Heart right ventricle (tissue), 16 donors: ENCODE measurements at regions of chr1 and their contacts with region 1.

Region 1: DNA sequence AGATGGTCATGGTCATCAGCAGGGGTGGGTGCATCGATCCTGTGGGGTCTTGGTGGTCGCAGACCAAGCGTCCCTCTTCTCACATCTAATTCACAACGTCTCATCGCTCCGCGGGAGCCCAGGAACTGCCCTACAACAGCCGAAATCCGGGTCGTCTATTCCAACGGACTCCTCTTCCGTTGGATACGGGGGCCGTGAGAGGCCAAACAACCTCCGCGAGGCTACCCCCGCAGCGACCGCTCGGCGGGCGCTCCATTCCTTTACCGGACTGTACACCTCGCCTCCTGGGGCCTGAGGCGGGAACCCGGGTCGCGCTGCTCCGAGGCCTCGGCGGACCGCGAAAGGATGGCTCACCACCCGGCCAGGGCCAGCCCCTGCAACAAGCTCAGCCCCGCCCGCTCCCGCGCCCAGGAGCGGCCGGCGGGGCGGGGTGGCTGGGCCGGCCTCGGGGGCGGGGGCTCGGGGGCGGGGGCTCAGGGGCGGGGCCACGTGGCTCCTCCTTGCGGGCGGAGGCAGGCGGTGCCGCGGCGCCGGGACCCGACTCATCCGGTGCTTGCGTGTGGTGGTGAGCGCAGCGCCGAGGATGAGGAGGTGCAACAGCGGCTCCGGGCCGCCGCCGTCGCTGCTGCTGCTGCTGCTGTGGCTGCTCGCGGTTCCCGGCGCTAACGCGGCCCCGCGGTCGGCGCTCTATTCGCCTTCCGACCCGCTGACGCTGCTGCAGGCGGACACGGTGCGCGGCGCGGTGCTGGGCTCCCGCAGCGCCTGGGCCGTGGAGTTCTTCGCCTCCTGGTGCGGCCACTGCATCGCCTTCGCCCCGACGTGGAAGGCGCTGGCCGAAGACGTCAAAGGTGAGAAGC is at the start of gene QSOX1:
- DNase-seq: peak; percentile 91 to 92
- ATAC-seq: peak; percentile 88 to 96 (median 94)
- H3K4me3 ChIP-seq: peak within 1 kb of the TSS; percentile 73 to 100 (median 95)
- H3K27ac ChIP-seq: peak within 1 kb of the TSS; percentile 93 to 98 (median 96)
- H3K4me1 ChIP-seq: peaks cover 0 to 57% (median 32%) of the 10 kb centered on the region in 9 donors
- H3K27me3 ChIP-seq: no peaks in the 10 kb centered on the region
- CTCF ChIP-seq: peak; percentile 20 to 56 (median 39)
- total RNA-seq, gene QSOX1: 43.5 to 198 (median 84.6) TPM

Region 2: GRCh38 chr1:179954493-179955297 is 199.9 kb before region 1 on chr1 and contains the start of gene CEP350:
- intact Hi-C with region 1: loop called in 1 of 10 experiments (anchors 10 kb)
- DNase-seq: peak; percentile 98 to 99
- ATAC-seq: peak; percentile 98 to 99 (median 99)
- H3K4me3 ChIP-seq: peak within 1 kb of the TSS; percentile 72 to 99 (median 96)
- H3K27ac ChIP-seq: peak within 1 kb of the TSS; percentile 93 to 99 (median 96)
- H3K4me1 ChIP-seq: peaks cover 8 to 62% (median 34%) of the 10 kb centered on the region in 9 donors
- H3K27me3 ChIP-seq: no peaks in the 10 kb centered on the region
- CTCF ChIP-seq: no peak
- total RNA-seq, gene CEP350: 23.2 to 46.3 (median 39.0) TPM

Region 3: DNA sequence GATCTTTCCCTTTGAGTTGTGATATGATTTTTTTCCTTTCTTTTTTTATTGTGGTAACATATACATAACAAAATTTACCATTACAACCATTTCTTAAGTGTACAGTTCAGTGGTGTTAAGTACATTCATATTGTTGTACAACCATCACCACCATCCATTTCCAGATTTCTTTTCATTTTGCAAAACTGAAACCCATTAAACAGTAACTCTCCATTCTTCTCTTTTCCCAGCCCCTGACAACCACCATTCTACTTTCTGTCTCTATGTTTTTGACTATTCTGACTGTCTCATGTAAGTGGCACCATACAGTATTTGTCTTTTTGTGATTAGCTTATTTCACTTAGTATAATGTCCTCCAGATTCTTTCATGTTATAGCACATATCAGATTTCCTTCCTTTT is 169.6 kb before region 1 on chr1:
- intact Hi-C with region 1: no loop called
- DNase-seq: no peak
- ATAC-seq: no peak
- H3K4me3 ChIP-seq: no peak overlapping the region
- H3K27ac ChIP-seq: no peak overlapping the region
- H3K4me1 ChIP-seq: peaks cover 0 to 11% (median 0%) of the 10 kb centered on the region in 9 donors
- H3K27me3 ChIP-seq: no peaks in the 10 kb centered on the region
- CTCF ChIP-seq: no peak

Region 4: GRCh38 chr1:180083164-180083563 is 71.4 kb before region 1 on chr1:
- intact Hi-C with region 1: no loop called
- DNase-seq: no peak
- ATAC-seq: no peak
- H3K4me3 ChIP-seq: no peak overlapping the region
- H3K27ac ChIP-seq: no peak overlapping the region
- H3K4me1 ChIP-seq: peaks cover 0 to 5% (median 0%) of the 10 kb centered on the region in 9 donors
- H3K27me3 ChIP-seq: no peaks in the 10 kb centered on the region
- CTCF ChIP-seq: no peak

Region 5: GRCh38 chr1:180116964-180117763 is 37.4 kb before region 1 on chr1:
- intact Hi-C with region 1: loop called in 1 of 10 experiments (anchors 5 kb)
- DNase-seq: peak in 1 of 2 donors; percentile 15
- ATAC-seq: peak; percentile 21 to 88 (median 72)
- H3K4me3 ChIP-seq: no peak overlapping the region
- H3K27ac ChIP-seq: peak overlapping the region in 2 of 10 donors; percentile 2 to 24
- H3K4me1 ChIP-seq: peaks cover 5 to 45% (median 31%) of the 10 kb centered on the region in 9 donors
- H3K27me3 ChIP-seq: no peaks in the 10 kb centered on the region
- CTCF ChIP-seq: no peak